ENCODE measurements at regions of chr3 and their contacts with region 1.

Region 1: GRCh38 chr3:132659365-132660051 is at the start of gene ACAD11:
- DNase-seq: peak; percentile 85
- H3K4me3 ChIP-seq: peak within 1 kb of the TSS; percentile 43 to 71 (median 70)
- H3K27ac ChIP-seq: peak within 1 kb of the TSS; percentile 68
- H3K4me1 ChIP-seq: peaks cover 28% of the 10 kb centered on the region
- H3K27me3 ChIP-seq: no peaks in the 10 kb centered on the region
- CTCF ChIP-seq: peak; percentile 66 to 70
- POLR2A ChIP-seq: no peak
- total RNA-seq, gene ACAD11: 9.6 and 15.2 TPM in 2 replicates

Region 2: DNA sequence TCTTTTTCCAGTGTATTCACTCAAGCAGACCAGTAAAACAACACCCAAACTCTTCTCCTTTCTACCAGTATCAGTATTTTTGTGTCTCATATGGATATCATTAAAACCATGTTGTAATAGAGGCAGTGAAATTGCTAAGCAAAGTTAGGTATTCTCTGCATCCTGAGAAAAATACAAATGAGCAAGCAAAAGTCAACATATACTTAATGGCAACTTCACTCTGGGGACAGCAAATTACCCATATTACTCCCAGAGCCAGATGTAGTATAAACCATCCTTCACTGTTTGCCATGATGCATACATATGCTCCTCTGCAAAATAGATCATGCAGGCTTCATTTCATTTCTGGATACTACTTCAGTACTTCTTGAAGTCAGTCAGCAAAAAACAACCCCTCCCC is 22.7 kb after region 1 on chr3:
- CTCF ChIA-PET with region 1: interaction called, 6 read pairs
- POLR2A ChIA-PET with region 1: no interaction called
- dilution Hi-C with region 1: no loop called
- intact Hi-C with region 1: loop called (anchors 1 kb)
- DNase-seq: no peak
- H3K4me3 ChIP-seq: no peak overlapping the region
- H3K27ac ChIP-seq: no peak overlapping the region
- H3K4me1 ChIP-seq: no peaks in the 10 kb centered on the region
- H3K27me3 ChIP-seq: no peaks in the 10 kb centered on the region
- CTCF ChIP-seq: no peak
- POLR2A ChIP-seq: no peak

Region 3: GRCh38 chr3:134576426-134576825 is 1916.9 kb after region 1 on chr3:
- CTCF ChIA-PET with region 1: no interaction called
- POLR2A ChIA-PET with region 1: no interaction called
- dilution Hi-C with region 1: no loop called
- intact Hi-C with region 1: no loop called
- DNase-seq: no peak
- H3K4me3 ChIP-seq: no peak overlapping the region
- H3K27ac ChIP-seq: no peak overlapping the region
- H3K4me1 ChIP-seq: no peaks in the 10 kb centered on the region
- H3K27me3 ChIP-seq: no peaks in the 10 kb centered on the region
- CTCF ChIP-seq: no peak
- POLR2A ChIP-seq: no peak